ENCODE measurements at regions of chr9 and their contacts with region 1.

Region 1: GRCh38 chr9:99184475-99185347 is 37.0 kb downstream of the ALG2 start:
- DNase-seq: peak; percentile 75 to 89 (median 78)
- ATAC-seq: peak; percentile 96
- H3K4me3 ChIP-seq: no peak overlapping the region
- H3K27ac ChIP-seq: no peak overlapping the region
- H3K4me1 ChIP-seq: peaks cover 2 to 5% of the 10 kb centered on the region in 2 experiments; a peak in 3 of 5 replicates
- H3K27me3 ChIP-seq: peaks cover 18 to 37% of the 10 kb centered on the region in 2 experiments
- CTCF ChIP-seq: peak; percentile 83 to 96 (median 94)
- EP300 ChIP-seq: no peak
- POLR2A ChIP-seq: no peak
- RAD21 ChIP-seq: peak; percentile 77 to 90

Region 2: GRCh38 chr9:99130069-99130468 is 54.6 kb before region 1 on chr9:
- CTCF ChIA-PET with region 1: no interaction called
- POLR2A ChIA-PET with region 1: no interaction called
- in situ Hi-C with region 1: no loop called
- intact Hi-C with region 1: no loop called
- DNase-seq: no peak
- ATAC-seq: peak; percentile 36; the same call in 2 of the 3 replicates
- H3K4me3 ChIP-seq: no peak overlapping the region
- H3K27ac ChIP-seq: no peak overlapping the region
- H3K4me1 ChIP-seq: peaks cover 0 to 38% of the 10 kb centered on the region in 2 experiments; a peak in 3 of 5 replicates
- H3K27me3 ChIP-seq: no peaks in the 10 kb centered on the region
- CTCF ChIP-seq: no peak
- EP300 ChIP-seq: no peak
- POLR2A ChIP-seq: no peak
- RAD21 ChIP-seq: no peak

Region 3: DNA sequence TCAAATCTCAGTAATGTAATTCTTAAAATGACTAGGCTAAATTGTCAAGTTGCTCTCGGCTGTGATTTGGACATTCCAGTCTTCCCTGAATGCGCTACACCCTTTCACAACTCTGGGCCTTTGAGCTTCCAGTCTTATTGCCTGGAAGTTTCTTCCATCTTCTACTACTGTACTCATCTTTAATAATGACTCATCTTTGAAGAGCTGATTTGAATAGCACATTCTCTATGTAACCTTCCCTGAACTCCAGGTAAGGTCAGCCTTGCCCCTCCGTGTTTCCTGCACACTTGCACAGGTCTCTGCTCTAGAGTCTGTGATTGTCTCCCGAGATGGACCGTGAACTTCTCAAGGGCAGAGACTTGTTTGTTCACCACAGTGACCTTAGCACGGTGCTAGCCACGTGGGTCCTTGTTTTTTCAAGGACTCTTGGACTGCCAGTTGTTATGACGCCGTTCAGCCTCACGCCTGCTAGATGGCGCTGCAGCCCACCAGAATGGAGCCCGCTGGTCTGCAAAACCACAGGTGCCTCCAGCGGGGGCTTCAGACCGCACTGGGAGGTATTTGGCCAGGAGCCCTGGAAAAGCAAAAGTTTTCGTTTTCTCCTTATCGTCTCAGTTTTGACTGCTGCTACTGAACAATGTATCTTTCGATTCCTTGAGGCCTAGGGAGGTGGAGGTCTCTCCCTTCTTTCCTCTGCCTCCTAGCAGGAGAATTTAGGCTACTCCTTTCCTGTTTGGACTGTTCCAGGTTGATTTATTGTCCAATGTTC is 81.7 kb after region 1 on chr9:
- CTCF ChIA-PET with region 1: no interaction called
- POLR2A ChIA-PET with region 1: no interaction called
- in situ Hi-C with region 1: loop called (anchors 5 kb)
- intact Hi-C with region 1: loop called (anchors 2 kb)
- DNase-seq: peak; percentile 61 to 84 (median 73)
- ATAC-seq: peak; percentile 95
- H3K4me3 ChIP-seq: no peak overlapping the region
- H3K27ac ChIP-seq: no peak overlapping the region
- H3K4me1 ChIP-seq: peaks cover 3 to 4% of the 10 kb centered on the region in 2 experiments; a peak in 3 of 5 replicates
- H3K27me3 ChIP-seq: peaks cover 4 to 10% of the 10 kb centered on the region in 2 experiments; a peak in 3 of 5 replicates
- CTCF ChIP-seq: peak; percentile 92 to 96 (median 93)
- EP300 ChIP-seq: no peak
- POLR2A ChIP-seq: no peak
- RAD21 ChIP-seq: peak; percentile 89 to 90

Region 4: GRCh38 chr9:99345942-99346341 is 161.2 kb after region 1 on chr9:
- CTCF ChIA-PET with region 1: no interaction called
- POLR2A ChIA-PET with region 1: no interaction called
- in situ Hi-C with region 1: no loop called
- intact Hi-C with region 1: loop called (anchors 10 kb)
- DNase-seq: no peak
- ATAC-seq: no peak
- H3K4me3 ChIP-seq: no peak overlapping the region
- H3K27ac ChIP-seq: no peak overlapping the region
- H3K4me1 ChIP-seq: no peaks in the 10 kb centered on the region
- H3K27me3 ChIP-seq: peaks cover 9 to 11% of the 10 kb centered on the region in 2 experiments; a peak in 2 of 5 replicates
- CTCF ChIP-seq: no peak
- EP300 ChIP-seq: no peak
- POLR2A ChIP-seq: no peak
- RAD21 ChIP-seq: no peak

Region 5: DNA sequence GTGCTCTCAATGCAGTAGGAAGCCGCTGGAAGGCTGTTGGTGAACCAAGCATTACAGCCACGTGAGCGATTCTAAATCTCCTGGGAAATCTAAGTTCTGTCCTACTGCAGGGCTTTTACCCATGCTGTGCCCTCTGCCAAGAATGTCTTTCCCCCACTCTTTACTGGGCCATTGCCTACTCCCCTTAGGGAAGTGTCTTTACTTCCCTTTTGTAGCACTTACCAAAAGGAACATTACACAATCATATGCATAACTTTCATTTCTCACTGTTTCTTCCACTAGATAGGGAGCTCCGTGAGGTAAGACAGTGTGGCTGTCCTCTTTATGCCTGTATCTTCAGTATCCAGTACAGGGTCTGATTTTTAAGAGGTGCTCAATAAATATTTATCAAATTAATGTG is 395.3 kb after region 1 on chr9:
- CTCF ChIA-PET with region 1: no interaction called
- POLR2A ChIA-PET with region 1: no interaction called
- in situ Hi-C with region 1: no loop called
- intact Hi-C with region 1: loop called (anchors 10 kb)
- DNase-seq: no peak
- ATAC-seq: no peak
- H3K4me3 ChIP-seq: no peak overlapping the region
- H3K27ac ChIP-seq: no peak overlapping the region
- H3K4me1 ChIP-seq: no peaks in the 10 kb centered on the region
- H3K27me3 ChIP-seq: no peaks in the 10 kb centered on the region
- CTCF ChIP-seq: no peak
- EP300 ChIP-seq: no peak
- POLR2A ChIP-seq: no peak
- RAD21 ChIP-seq: no peak

Region 6: GRCh38 chr9:99889121-99889520 is 704.4 kb after region 1 on chr9:
- CTCF ChIA-PET with region 1: no interaction called
- POLR2A ChIA-PET with region 1: no interaction called
- in situ Hi-C with region 1: no loop called
- intact Hi-C with region 1: loop called (anchors 10 kb)
- DNase-seq: no peak
- ATAC-seq: peak; percentile 60
- H3K4me3 ChIP-seq: no peak overlapping the region
- H3K27ac ChIP-seq: no peak overlapping the region
- H3K4me1 ChIP-seq: no peaks in the 10 kb centered on the region
- H3K27me3 ChIP-seq: no peaks in the 10 kb centered on the region; a peak in 2 of 5 replicates
- CTCF ChIP-seq: 0 out of 6 replicates have a peak, but pooled peaks of 2 of the 3 experiments have one; percentile 12 to 15
- EP300 ChIP-seq: no peak
- POLR2A ChIP-seq: no peak
- RAD21 ChIP-seq: peak in 1 of 2 experiments; percentile 27; a peak in 1 of 4 replicates

Region 7: DNA sequence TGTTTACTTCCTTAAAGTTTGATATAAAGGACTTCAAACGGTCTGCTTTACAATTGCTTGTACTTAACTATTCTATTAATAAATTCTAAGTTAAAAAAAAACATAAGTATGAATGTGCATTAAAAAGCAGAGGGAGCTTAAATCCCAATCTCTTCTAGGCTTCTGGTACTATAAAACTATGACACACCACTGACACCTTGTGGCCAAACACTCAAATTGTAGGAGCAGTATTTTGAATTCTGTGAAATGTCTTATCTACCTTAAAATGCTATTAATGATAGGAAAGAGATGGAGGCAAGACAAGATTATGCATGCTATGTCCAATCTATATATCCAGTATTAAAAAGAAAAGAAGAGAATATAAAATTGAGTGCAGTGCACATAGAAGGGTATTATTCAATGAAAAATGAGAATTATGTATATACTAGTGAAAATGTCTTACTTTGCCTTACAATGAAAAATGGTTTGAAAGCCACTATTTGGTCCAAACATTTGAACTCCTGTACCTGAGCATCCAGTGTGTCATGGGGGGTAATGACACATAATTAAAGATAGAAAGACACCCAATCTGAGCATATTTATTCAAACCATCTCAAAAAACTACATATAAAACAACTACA is 826.5 kb after region 1 on chr9:
- CTCF ChIA-PET with region 1: interaction called, 7 read pairs
- POLR2A ChIA-PET with region 1: no interaction called
- in situ Hi-C with region 1: loop called (anchors 10 kb)
- intact Hi-C with region 1: loop called (anchors 5 kb)
- DNase-seq: peak; percentile 48 to 74 (median 59)
- ATAC-seq: peak; percentile 77; the same call in 2 of the 3 replicates
- H3K4me3 ChIP-seq: no peak overlapping the region
- H3K27ac ChIP-seq: no peak overlapping the region
- H3K4me1 ChIP-seq: no peaks in the 10 kb centered on the region
- H3K27me3 ChIP-seq: no peaks in the 10 kb centered on the region
- CTCF ChIP-seq: peak; percentile 49 to 79 (median 55); a peak in 5 of 6 replicates
- EP300 ChIP-seq: no peak
- POLR2A ChIP-seq: no peak
- RAD21 ChIP-seq: peak; percentile 83 to 90

Region 8: GRCh38 chr9:100598641-100599145 is 1414.0 kb after region 1 on chr9:
- CTCF ChIA-PET with region 1: no interaction called
- POLR2A ChIA-PET with region 1: no interaction called
- in situ Hi-C with region 1: no loop called
- intact Hi-C with region 1: loop called (anchors 5 kb)
- DNase-seq: peak; percentile 66 to 84 (median 74)
- ATAC-seq: peak; percentile 89
- H3K4me3 ChIP-seq: peak overlapping the region; percentile 41
- H3K27ac ChIP-seq: no peak overlapping the region
- H3K4me1 ChIP-seq: peaks cover 6% of the 10 kb centered on the region in 2 experiments; a peak in 3 of 5 replicates
- H3K27me3 ChIP-seq: no peaks in the 10 kb centered on the region
- CTCF ChIP-seq: no peak; a peak in 1 of 6 replicates
- EP300 ChIP-seq: no peak
- POLR2A ChIP-seq: peak; percentile 47; the same call in 1 of the 2 replicates
- RAD21 ChIP-seq: no peak